ENCODE measurements at regions of chr11 and their contacts with region 1.

Region 1: GRCh38 chr11:47932544-47932943 is 47.8 kb upstream of the PTPRJ start:
- DNase-seq: no peak
- ATAC-seq: peak; percentile 60
- H3K4me3 Mint-ChIP-seq: no peak overlapping the region
- H3K27ac Mint-ChIP-seq: no peak overlapping the region
- H3K4me1 Mint-ChIP-seq: peaks cover 17% of the 10 kb centered on the region
- H3K27me3 Mint-ChIP-seq: no peaks in the 10 kb centered on the region
- CTCF ChIP-seq: no peak

Region 2: GRCh38 chr11:47917643-47918369 is 14.7 kb before region 1 on chr11:
- CTCF ChIA-PET with region 1: interaction called, 42 read pairs
- POLR2A ChIA-PET with region 1: interaction called, 3 read pairs
- intact Hi-C with region 1: no loop called
- DNase-seq: no peak
- ATAC-seq: no peak
- H3K4me3 Mint-ChIP-seq: no peak overlapping the region
- H3K27ac Mint-ChIP-seq: no peak overlapping the region
- H3K4me1 Mint-ChIP-seq: peaks cover 50% of the 10 kb centered on the region
- H3K27me3 Mint-ChIP-seq: no peaks in the 10 kb centered on the region
- CTCF ChIP-seq: no peak

Region 3: GRCh38 chr11:47983464-47984397 is 51.2 kb after region 1 on chr11:
- CTCF ChIA-PET with region 1: interaction called, 16 read pairs
- POLR2A ChIA-PET with region 1: no interaction called
- intact Hi-C with region 1: no loop called
- DNase-seq: no peak
- ATAC-seq: no peak
- H3K4me3 Mint-ChIP-seq: peak overlapping the region; percentile 67
- H3K27ac Mint-ChIP-seq: peak overlapping the region; percentile 84
- H3K4me1 Mint-ChIP-seq: peaks cover 49% of the 10 kb centered on the region
- H3K27me3 Mint-ChIP-seq: no peaks in the 10 kb centered on the region
- CTCF ChIP-seq: no peak

Region 4: GRCh38 chr11:48020092-48020755 is 87.7 kb after region 1 on chr11:
- CTCF ChIA-PET with region 1: interaction called, 11 read pairs
- POLR2A ChIA-PET with region 1: no interaction called
- intact Hi-C with region 1: no loop called
- DNase-seq: peak; percentile 73
- ATAC-seq: peak; percentile 50
- H3K4me3 Mint-ChIP-seq: peak overlapping the region; percentile 4
- H3K27ac Mint-ChIP-seq: peak overlapping the region; percentile 73
- H3K4me1 Mint-ChIP-seq: peaks cover 57% of the 10 kb centered on the region
- H3K27me3 Mint-ChIP-seq: no peaks in the 10 kb centered on the region
- CTCF ChIP-seq: no peak

Region 5: DNA sequence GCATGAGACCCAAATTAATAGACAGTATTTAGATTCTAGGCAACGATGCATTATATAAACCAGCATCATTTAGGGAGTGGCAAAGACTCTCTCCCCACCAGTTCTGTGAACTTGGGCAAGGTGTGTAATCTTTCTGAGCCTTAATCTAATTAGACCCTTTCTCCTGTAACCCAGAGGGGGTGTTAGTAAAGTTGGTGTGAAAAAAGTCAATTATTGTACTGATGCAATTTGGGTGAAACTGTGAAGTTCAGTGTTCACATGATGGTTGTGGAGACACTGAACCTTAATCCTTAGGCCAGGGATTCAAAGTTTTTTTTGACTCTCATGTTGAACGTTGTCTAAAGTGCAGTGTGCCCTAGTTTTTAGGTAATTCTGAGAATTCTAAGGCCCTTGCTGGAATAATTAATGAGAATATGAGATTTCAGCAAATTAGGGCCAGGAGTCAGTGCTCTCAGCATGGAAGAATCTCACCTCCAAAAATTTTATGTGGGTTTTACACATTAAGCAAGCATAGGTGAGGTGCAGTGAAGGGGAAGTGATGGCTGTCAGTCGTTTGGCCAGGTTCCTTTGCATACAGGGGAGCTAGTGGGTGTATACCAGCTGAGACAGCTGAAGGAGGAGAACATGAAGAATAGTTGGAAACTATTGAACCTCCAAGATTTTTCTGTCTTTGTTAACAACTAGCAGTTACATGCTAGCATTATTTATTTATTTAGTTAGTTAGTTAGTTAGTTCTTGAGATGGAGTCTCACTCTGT is 142.1 kb after region 1 on chr11:
- CTCF ChIA-PET with region 1: interaction called, 11 read pairs
- POLR2A ChIA-PET with region 1: no interaction called
- intact Hi-C with region 1: no loop called
- DNase-seq: no peak
- ATAC-seq: no peak
- H3K4me3 Mint-ChIP-seq: no peak overlapping the region
- H3K27ac Mint-ChIP-seq: no peak overlapping the region
- H3K4me1 Mint-ChIP-seq: peaks cover 18% of the 10 kb centered on the region
- H3K27me3 Mint-ChIP-seq: no peaks in the 10 kb centered on the region
- CTCF ChIP-seq: no peak

Region 6: GRCh38 chr11:48109046-48109666 is 176.6 kb after region 1 on chr11:
- CTCF ChIA-PET with region 1: interaction called, 161 read pairs
- POLR2A ChIA-PET with region 1: interaction called, 7 read pairs
- intact Hi-C with region 1: loop called (anchors 1 kb)
- DNase-seq: no peak
- ATAC-seq: peak; percentile 22
- H3K4me3 Mint-ChIP-seq: peak overlapping the region; percentile 59
- H3K27ac Mint-ChIP-seq: peak overlapping the region; percentile 95
- H3K4me1 Mint-ChIP-seq: peaks cover 46% of the 10 kb centered on the region
- H3K27me3 Mint-ChIP-seq: no peaks in the 10 kb centered on the region
- CTCF ChIP-seq: no peak

Region 7: GRCh38 chr11:48193876-48194275 is 261.3 kb after region 1 on chr11:
- CTCF ChIA-PET with region 1: no interaction called
- POLR2A ChIA-PET with region 1: no interaction called
- intact Hi-C with region 1: no loop called
- DNase-seq: no peak
- ATAC-seq: no peak
- H3K4me3 Mint-ChIP-seq: no peak overlapping the region
- H3K27ac Mint-ChIP-seq: no peak overlapping the region
- H3K4me1 Mint-ChIP-seq: peaks cover 18% of the 10 kb centered on the region
- H3K27me3 Mint-ChIP-seq: peaks cover 3% of the 10 kb centered on the region
- CTCF ChIP-seq: no peak